Dorsolateral prefrontal cortex (tissue), 120 donors: ENCODE measurements at regions of chr7 and their contacts with region 1.

Region 1: GRCh38 chr7:5636914-5637313 is 144.5 kb downstream of the RNF216 start:
- DNase-seq: peak in 8 of 10 donors; percentile 43 to 87 (median 70)
- H3K4me3 ChIP-seq: peak overlapping the region in 40 of 59 donors; percentile 0 to 46 (median 24)
- H3K27ac ChIP-seq: peak overlapping the region; percentile 71 to 98 (median 91)
- H3K27me3 ChIP-seq: no peaks in the 10 kb centered on the region
- CTCF ChIP-seq: peak in 1 of 56 donors; percentile 24

Region 2: DNA sequence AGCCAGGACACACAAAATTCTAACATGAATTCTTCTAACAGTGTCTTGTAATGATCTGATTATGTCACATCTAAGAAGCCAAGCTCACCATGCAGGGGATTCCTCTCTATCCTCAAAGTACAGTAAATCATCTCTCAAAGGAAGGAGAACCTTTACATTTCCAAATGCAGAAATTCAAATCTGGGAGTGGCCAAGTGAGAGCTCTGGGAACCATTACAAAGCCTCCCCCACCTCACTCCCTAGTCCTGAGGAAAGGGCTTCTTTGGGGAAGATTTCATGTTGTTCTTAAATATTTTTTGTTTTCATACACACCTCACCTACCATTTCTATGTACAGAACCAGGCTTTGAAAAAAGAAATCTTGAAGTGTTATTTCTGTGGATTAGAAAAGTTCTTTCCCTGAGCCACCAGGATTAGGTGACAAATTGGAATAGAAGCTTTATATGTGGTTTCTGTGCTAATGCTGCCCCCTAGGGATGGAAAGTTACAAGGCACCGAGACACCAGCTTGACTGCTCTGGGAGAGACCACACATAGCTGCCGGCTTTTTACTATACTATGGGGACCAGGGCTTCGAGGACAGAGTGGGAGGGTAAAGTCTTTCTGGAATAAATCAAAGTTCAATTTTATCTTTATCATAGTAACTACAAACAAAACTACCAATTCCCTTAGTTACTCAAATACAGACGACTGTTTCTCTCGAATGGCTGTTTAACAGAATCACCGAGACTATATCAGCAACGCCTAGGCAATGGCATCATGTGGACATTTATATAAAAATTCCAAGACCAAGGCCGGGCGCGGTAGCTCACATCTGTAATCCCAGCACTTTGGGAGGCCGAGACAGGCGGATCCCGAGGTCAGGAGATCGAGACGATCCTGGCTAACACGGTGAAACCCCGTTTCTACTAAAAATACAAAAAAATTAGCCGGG is 28.4 kb after region 1 on chr7:
- intact Hi-C with region 1: loop called in 1 of 2 experiments (anchors 2 kb)
- DNase-seq: peak; percentile 41 to 89 (median 74)
- H3K4me3 ChIP-seq: peak overlapping the region in 1 of 59 donors; percentile 6
- H3K27ac ChIP-seq: peak overlapping the region in 40 of 59 donors; percentile 2 to 86 (median 50)
- H3K27me3 ChIP-seq: no peaks in the 10 kb centered on the region
- CTCF ChIP-seq: peak; percentile 84 to 97 (median 92)